ENCODE measurements at regions of chr9 and their contacts with region 1.

Region 1: GRCh38 chr9:17531642-17532254 is 47.1 kb upstream of the SH3GL2 start:
- DNase-seq: no peak
- ATAC-seq: peak; percentile 55

Region 2: DNA sequence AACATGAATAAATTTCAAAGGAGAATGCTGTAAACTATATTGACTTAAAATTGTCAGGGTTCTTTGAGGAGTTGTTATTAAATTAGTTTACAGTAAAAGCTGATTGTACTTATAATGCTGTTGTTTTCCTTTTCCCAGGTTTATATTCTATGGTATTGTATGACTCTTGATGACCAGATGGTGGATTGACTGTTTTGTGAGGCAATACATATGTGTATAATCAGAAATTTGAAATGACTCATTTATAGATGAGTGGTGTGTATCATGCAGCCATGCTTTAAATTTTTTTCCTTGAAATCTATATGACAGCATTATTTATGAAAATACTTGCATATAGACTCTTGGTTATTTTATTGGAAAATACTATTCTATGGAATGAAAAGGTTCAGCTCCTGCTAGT is 201.7 kb before region 1 on chr9:
- intact Hi-C with region 1: no loop called
- DNase-seq: no peak
- ATAC-seq: no peak

Region 3: DNA sequence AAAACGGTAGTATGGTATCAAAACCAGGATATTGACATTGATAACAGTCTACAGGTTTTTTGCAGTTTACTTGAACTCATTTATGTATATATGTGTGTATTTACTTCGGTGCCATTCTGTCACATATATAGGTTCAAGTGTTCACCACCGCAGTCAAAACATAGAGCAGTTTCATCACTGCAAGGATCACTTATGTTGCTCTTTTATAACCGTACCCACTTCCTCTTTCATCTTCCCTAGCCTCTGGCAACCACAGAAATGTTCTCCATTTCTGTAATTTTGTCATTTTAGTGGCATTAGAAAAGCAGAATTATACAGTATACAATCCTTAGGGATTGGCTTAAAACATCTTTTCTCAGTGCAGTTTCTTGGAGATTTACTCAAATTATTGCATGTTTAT is 137.5 kb after region 1 on chr9:
- intact Hi-C with region 1: no loop called
- DNase-seq: no peak
- ATAC-seq: no peak

Region 4: DNA sequence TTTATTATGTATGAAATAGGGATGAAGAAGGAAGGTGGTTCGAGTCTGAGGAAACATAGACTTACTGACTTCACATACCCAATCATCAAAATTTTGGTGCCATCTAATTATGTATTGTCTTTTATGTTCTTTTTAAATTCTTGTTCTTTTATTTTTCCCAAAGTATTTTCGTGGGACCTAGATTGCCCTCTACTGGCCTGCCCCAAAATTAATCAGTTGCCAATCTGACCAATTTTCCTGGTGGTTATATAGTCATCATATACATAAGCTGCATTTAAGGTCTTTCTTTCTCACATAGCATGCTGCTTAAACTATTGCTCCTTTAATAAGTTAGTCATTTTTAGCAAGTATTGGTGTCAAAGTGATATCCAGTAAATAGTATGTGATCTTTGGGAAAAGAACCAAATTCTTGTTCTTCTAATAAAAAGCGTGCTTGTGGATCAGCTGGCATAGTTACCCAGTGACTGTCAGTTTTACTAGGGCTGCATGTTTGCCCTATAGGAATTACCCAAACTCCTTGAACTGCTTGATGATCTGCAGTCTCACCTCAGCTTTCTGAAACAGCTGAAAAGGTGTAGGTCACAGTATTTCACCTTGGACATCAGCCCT is 270.6 kb after region 1 on chr9:
- intact Hi-C with region 1: loop called (anchors 2 kb)
- DNase-seq: no peak
- ATAC-seq: no peak

Region 5: DNA sequence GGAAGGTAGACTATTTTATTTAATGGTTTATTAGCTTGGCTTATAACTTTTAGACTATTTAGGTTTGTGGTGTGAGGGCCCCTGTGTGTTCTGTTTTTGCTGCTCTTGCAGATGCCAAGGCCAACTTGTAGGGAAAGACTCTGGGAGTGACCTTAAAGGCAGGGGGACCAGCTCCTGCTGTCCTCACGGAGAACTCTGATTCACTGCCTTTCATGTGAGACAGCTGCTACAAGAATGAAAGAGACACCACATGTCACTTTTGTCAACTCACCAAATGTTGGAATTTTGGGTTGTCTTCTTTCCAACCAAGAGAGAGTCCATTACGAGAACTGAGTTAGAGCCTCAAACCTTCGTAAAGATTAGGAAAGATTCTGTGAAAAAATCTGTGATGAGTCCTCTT is 683.9 kb after region 1 on chr9:
- intact Hi-C with region 1: loop called (anchors 5 kb)
- DNase-seq: no peak
- ATAC-seq: no peak